CD8-positive, alpha-beta memory T cell (primary cell): ENCODE measurements at regions of chr6 and their contacts with region 1.

Region 1: DNA sequence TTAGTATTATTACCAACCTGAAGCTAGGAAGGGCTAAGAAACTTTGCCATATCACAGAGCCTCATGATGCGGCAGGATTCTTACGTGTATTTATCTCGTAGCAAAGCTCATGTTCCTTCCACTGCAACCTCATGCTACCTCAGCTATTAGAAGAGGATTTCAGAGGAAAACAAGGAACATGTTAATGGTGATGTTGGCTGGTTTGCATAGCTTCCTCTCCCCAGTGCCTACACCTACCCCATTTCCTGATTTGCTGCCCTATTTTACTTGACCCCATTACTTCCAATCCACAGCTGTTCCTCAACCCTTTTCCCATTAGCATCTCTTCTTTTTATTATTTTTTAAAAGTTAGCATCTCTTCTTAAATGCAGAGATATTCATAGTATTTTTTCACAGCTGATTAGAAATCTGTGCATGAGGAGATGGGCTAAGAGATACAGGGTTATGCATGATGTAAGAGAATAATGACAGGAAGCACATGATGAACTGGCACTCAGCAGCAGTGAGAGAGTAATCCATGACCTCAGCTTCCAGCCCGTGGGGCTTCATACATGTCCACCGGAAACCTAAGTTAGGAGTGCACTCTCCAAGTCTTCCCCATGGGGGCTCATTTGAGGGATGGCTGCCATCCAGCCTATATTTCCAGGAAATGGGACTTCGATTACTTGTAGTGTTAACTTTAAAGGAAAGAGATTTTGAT is 106.1 kb upstream of the ASF1A start:
- DNase-seq: peak in 1 of 5 donors; percentile 14
- H3K4me3 ChIP-seq: no peak overlapping the region
- H3K4me3 Mint-ChIP-seq: peak overlapping the region; percentile 3 to 72 (median 15)
- H3K27ac ChIP-seq: no peak overlapping the region
- H3K27ac Mint-ChIP-seq: peak overlapping the region; percentile 13 to 98 (median 92)
- H3K4me1 ChIP-seq: peaks cover 15% of the 10 kb centered on the region
- H3K4me1 Mint-ChIP-seq: peaks cover 27 to 44% (median 36%) of the 10 kb centered on the region in 3 donors
- H3K27me3 ChIP-seq: no peaks in the 10 kb centered on the region
- H3K27me3 Mint-ChIP-seq: no peaks in the 10 kb centered on the region

Region 2: DNA sequence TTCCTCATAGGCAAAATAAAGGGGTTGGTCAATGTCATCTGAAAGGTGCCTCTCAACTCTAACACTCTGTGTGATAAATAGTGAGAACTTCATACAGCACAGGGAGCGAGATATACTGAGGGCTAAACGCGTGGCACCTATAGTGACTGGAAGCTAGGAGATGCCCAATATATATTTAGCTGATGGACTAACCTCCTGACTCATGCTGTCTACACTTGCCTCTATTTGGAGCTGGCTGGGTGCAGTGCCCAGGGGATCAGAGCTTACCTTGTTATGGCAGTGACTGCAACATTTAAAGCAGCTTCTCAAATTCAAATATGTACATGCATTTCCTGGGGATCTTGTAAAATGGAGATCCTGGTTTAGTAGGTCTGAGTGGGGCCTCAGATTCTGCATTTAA is 351.4 kb before region 1 on chr6:
- CTCF ChIA-PET with region 1: no interaction called
- POLR2A ChIA-PET with region 1: no interaction called
- DNase-seq: no peak
- H3K4me3 ChIP-seq: no peak overlapping the region
- H3K4me3 Mint-ChIP-seq: no peak overlapping the region
- H3K27ac ChIP-seq: no peak overlapping the region
- H3K27ac Mint-ChIP-seq: no peak overlapping the region
- H3K4me1 ChIP-seq: no peaks in the 10 kb centered on the region
- H3K4me1 Mint-ChIP-seq: no peaks in the 10 kb centered on the region
- H3K27me3 ChIP-seq: no peaks in the 10 kb centered on the region
- H3K27me3 Mint-ChIP-seq: no peaks in the 10 kb centered on the region

Region 3: GRCh38 chr6:118606268-118606667 is 181.6 kb before region 1 on chr6:
- CTCF ChIA-PET with region 1: no interaction called
- POLR2A ChIA-PET with region 1: interaction called, 10 read pairs
- DNase-seq: no peak
- H3K4me3 ChIP-seq: no peak overlapping the region
- H3K4me3 Mint-ChIP-seq: no peak overlapping the region
- H3K27ac ChIP-seq: no peak overlapping the region
- H3K27ac Mint-ChIP-seq: no peak overlapping the region
- H3K4me1 ChIP-seq: peaks cover 17% of the 10 kb centered on the region
- H3K4me1 Mint-ChIP-seq: peaks cover 39 to 68% (median 63%) of the 10 kb centered on the region in 3 donors
- H3K27me3 ChIP-seq: no peaks in the 10 kb centered on the region
- H3K27me3 Mint-ChIP-seq: no peaks in the 10 kb centered on the region

Region 4: GRCh38 chr6:118876814-118877213 is 88.9 kb after region 1 on chr6:
- CTCF ChIA-PET with region 1: no interaction called
- POLR2A ChIA-PET with region 1: no interaction called
- DNase-seq: no peak
- H3K4me3 ChIP-seq: no peak overlapping the region
- H3K4me3 Mint-ChIP-seq: no peak overlapping the region
- H3K27ac ChIP-seq: no peak overlapping the region
- H3K27ac Mint-ChIP-seq: peak overlapping the region in 1 of 8 donors; percentile 4
- H3K4me1 ChIP-seq: peaks cover 15% of the 10 kb centered on the region
- H3K4me1 Mint-ChIP-seq: peaks cover 43 to 67% (median 65%) of the 10 kb centered on the region in 3 donors
- H3K27me3 ChIP-seq: no peaks in the 10 kb centered on the region
- H3K27me3 Mint-ChIP-seq: no peaks in the 10 kb centered on the region